ENCODE measurements at regions of chr2 and their contacts with region 1.

Region 1: GRCh38 chr2:9234680-9235387 is 28.2 kb downstream of the ASAP2 start:
- DNase-seq: peak; percentile 85 to 89
- ATAC-seq: peak; percentile 69 to 87
- H3K4me3 ChIP-seq: peak overlapping the region; percentile 3; the same call in 1 of the 3 replicates
- H3K27ac ChIP-seq: peak overlapping the region; percentile 73 to 88
- H3K4me1 ChIP-seq: peaks cover 68% of the 10 kb centered on the region
- CTCF ChIP-seq: no peak
- EP300 ChIP-seq: peak in 1 of 2 experiments; percentile 62; a peak in 2 of 5 replicates
- POLR2A ChIP-seq: no peak
- RAD21 ChIP-seq: no peak

Region 2: DNA sequence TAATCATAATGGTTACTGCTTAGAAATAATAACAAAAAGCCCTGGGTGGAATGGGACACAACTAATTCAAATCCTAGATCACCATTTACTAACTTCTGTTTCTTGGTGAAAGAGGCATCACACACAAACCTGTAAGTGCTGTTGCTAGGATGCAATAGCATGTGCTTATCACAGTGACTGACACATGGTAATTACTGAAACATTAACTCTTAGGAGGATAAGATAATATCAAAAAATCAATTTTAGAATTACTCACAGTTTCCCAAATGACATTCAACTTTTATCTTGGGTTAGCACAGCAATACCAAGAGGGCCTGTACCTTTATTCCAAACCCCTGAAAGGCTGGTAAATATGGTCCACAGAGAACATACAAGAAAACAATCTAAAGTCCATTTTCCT is 300.5 kb before region 1 on chr2:
- CTCF ChIA-PET with region 1: no interaction called
- POLR2A ChIA-PET with region 1: no interaction called
- DNase-seq: no peak
- ATAC-seq: no peak
- H3K4me3 ChIP-seq: no peak overlapping the region
- H3K27ac ChIP-seq: no peak overlapping the region
- H3K4me1 ChIP-seq: no peaks in the 10 kb centered on the region
- CTCF ChIP-seq: no peak
- EP300 ChIP-seq: no peak
- POLR2A ChIP-seq: no peak
- RAD21 ChIP-seq: no peak

Region 3: DNA sequence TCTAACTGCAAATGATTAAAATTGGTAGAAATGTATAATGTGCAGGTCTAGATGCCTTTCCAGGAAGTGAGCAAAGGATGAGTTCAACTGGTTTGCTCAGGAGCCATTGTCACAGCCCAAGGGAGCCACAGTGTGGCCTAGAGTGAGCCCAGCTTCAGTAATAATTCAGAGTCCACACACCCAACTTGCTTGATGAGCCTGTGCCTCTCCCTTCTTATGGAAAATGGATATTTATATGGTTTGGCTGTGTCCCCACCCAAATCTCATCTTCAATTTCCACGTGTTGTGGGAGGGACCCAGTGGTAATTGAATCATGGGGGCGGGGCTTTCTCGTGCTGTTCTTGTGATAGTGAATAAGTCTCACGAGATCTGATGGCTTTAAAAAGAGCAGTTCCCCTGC is 120.3 kb before region 1 on chr2:
- CTCF ChIA-PET with region 1: no interaction called
- POLR2A ChIA-PET with region 1: no interaction called
- DNase-seq: no peak
- ATAC-seq: no peak
- H3K4me3 ChIP-seq: no peak overlapping the region
- H3K27ac ChIP-seq: no peak overlapping the region
- H3K4me1 ChIP-seq: peaks cover 21% of the 10 kb centered on the region
- CTCF ChIP-seq: no peak
- EP300 ChIP-seq: no peak
- POLR2A ChIP-seq: no peak
- RAD21 ChIP-seq: peak; percentile 40 to 47

Region 4: DNA sequence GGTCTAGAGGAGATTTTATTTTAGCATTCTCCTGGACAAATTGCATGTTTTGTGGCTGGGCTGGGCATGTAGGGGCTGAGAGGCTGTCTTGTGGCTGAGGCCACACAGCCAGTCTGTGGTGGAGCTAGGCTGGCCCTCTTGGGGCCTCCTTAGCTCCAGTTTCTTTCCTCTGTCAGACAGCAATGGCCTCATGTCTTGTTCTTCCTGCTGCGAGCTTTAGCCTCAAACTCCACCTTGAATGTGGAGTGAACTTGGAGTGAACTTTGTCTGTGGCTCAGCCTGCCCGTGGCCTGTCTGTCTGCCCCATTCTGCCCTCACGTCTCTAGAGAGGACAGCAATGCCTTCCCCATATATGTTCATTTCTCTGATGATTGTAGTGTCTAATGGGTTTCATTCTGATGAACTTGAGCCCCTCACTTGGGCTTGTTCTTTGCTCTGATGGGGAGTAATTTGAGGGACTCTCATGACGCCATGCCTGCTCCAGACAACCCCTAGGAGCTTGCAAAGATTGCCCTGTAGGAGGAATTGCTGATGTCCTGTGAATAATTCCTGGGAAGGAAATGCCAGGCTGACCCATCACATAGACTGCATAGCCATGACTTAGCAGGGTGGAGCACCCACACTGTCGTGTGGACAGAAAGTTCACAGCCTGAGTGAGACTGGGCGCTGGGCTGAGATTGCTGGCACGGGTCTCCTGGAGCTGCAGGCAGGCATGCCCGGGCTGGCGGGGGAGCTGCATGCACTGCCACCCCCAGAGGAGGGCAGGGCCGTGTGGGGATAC is 14.4 kb after region 1 on chr2:
- CTCF ChIA-PET with region 1: interaction called, 11 read pairs
- POLR2A ChIA-PET with region 1: interaction called, 5 read pairs
- DNase-seq: peak in 1 of 2 experiments; percentile 70
- ATAC-seq: peak; percentile 46 to 71
- H3K4me3 ChIP-seq: no peak overlapping the region
- H3K27ac ChIP-seq: peak overlapping the region; percentile 67 to 84
- H3K4me1 ChIP-seq: peaks cover 82% of the 10 kb centered on the region
- CTCF ChIP-seq: no peak
- EP300 ChIP-seq: no peak
- POLR2A ChIP-seq: no peak
- RAD21 ChIP-seq: no peak